GM10248 (cell line): ENCODE measurements at regions of chr1 and their contacts with region 1.

Region 1: DNA sequence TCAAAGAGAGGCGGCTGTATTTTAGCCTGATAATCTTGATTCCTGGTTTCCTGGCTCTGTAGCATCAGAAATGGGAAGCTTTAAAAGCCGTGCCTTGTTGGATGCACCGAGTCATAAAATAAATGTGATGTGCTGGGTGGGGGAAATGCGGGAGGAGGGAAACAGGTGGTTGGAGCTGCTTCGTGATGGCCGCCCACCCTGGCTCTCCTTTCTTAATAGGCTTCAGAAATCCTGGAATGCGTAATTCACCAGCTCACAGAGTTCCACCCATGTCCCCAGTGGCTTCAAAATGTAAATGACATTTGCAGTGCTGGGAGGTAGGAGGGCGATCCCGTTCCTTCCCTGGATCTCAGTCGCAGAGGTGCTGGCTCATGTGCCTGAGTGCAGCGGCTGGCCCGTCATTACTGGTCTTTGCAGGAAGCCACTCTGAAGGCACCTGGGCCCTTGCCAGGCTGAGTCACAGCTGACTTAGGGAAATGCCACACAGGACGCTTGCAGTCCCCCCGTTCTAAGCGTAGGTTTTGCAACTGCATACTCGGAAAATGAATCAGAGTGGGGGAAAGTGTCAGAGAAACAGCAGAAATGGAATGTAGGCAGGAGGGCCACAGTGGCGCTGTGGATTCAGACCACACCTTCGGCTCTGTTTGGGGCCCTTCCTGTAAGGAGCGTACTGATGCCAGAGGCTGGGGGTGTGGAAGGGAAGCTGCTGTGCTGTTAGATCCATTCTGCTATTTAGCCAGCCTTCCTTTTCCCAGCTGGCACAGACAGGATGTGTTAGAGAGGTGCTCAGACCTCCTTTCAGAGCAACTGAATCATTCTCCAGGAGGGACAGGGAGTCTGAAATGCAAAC is 37.6 kb downstream of the GALNT2 start:
- DNase-seq: peak; percentile 69
- CTCF ChIP-seq: no peak

Region 2: GRCh38 chr1:229913489-229913888 is 191.1 kb before region 1 on chr1:
- CTCF ChIA-PET with region 1: no interaction called
- POLR2A ChIA-PET with region 1: no interaction called
- DNase-seq: no peak
- CTCF ChIP-seq: no peak

Region 3: DNA sequence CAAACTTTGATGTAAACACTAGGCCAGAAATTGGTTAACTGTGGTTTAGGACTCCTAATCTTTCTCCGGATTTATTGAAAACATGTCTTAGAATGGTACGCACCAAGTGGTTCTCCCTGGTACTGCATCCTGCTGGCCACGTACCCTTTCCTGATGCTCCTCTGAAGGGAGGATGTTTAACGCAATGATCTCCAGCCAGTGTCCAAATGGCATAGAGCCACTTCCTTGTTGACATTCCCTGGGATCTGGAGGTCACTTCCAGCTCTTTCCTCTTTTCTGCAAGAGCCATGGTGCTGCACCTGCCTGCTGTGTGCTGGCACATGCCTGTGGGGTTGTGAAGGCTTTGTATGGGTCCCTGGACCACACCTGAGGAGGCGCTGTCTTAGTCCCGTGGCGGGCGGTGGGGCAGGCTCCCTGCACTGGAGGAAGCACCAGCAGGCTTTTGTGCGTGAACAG is 16.3 kb after region 1 on chr1:
- CTCF ChIA-PET with region 1: interaction called, 138 read pairs
- POLR2A ChIA-PET with region 1: interaction called, 7 read pairs
- DNase-seq: no peak
- CTCF ChIP-seq: peak; percentile 19

Region 4: GRCh38 chr1:230263568-230264195 is 159.1 kb after region 1 on chr1:
- CTCF ChIA-PET with region 1: no interaction called
- POLR2A ChIA-PET with region 1: no interaction called
- DNase-seq: no peak
- CTCF ChIP-seq: no peak